Activated B cell treated with CpG ODN at 0.5 μM for 24 hours (primary cell): ENCODE measurements at regions of chr22 and their contacts with region 1.

Region 1: DNA sequence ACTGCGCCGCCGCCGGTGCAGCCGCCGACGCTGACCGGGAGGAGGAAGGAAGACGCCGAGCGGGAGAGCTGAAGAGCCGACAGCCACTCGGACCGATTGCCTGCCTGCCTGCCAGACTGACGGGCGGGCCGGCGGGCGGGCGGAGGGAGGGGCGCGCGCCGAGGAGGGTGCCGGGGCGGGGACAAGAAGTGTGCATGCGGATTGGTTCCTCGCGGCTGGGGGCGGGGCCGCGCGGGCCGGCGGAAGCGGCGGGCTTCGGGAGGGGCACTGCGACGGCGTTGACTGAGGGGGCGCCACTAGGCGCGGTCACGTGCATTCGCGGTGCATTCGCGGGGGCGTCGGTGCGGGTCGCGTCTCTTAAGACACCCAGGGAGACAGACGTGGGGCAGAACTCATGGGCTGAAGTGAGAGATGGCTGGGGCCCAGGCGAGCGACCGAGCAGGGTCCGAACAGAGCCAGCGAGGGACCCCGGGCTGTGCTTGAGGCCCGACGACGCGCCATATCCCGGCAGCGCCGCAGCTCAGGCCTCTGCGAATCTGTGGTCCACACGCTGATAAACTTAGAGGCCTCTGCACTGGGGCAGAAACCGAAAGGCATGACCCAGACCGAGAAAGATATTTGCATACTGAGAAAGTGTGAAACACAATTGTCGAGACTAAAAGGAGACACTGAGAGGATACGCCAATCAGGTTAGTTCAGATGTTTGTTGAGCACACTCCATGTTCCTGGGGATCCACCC is at the start of gene MAPK1:
- DNase-seq: peak; percentile 94
- ATAC-seq: peak; percentile 88
- H3K4me3 Mint-ChIP-seq: peak within 1 kb of the TSS; percentile 95
- H3K27ac Mint-ChIP-seq: peak within 1 kb of the TSS; percentile 100
- H3K4me1 Mint-ChIP-seq: peaks cover 50% of the 10 kb centered on the region
- H3K27me3 Mint-ChIP-seq: no peaks in the 10 kb centered on the region
- CTCF ChIP-seq: no peak
- total RNA-seq, gene MAPK1: 130 and 149 TPM in 2 replicates

Region 2: DNA sequence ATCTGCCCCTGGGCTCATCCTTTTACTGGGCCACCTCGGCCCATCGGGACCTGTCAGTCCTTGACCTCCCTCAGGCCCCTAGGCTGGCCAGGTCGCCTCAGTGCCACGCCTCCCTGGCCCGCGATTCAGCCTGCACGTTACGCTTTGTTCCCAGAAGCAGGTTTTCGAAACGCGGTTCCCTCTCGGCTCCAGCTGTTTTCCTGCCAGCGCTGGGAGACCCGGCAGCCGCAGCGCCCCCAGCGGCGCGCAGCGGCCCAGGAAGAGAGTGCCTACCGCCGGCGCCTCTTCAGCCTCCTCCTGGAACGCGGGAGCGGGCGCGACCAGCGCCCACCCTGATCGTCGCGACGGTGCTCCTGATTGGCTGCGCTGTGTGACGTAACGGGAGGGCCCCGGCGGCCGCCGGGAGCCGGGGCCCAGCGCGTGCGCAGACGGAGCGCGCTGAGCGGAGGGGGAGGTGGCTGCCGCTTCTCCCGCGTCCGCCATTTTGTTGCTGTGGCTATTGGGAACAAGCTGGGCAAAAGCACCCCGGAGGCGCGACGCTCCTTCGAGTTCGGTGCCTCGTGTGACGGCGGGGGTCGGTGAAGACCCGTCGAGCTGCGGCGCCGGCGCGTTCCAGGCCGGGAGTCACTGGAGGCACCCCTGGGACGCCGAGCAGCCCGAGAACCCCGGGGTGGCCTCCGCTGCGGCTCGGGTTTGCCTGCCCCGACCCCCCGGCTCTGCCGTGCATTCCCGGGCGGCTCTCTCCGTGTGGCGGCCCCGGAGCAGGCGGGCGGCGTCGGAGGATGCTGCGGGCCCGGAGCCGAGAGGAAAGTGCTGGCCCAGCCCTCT is 950.5 kb before region 1 on chr22 and contains the start of gene CRKL:
- CTCF ChIA-PET with region 1: no interaction called
- POLR2A ChIA-PET with region 1: no interaction called
- intact Hi-C with region 1: loop called (anchors 5 kb)
- DNase-seq: peak; percentile 89
- ATAC-seq: peak; percentile 97
- H3K4me3 Mint-ChIP-seq: peak within 1 kb of the TSS; percentile 97
- H3K27ac Mint-ChIP-seq: peak within 1 kb of the TSS; percentile 94
- H3K4me1 Mint-ChIP-seq: peaks cover 45% of the 10 kb centered on the region
- H3K27me3 Mint-ChIP-seq: no peaks in the 10 kb centered on the region
- CTCF ChIP-seq: peak; percentile 66
- total RNA-seq, gene CRKL: 51.1 and 55.7 TPM in 2 replicates

Region 3: GRCh38 chr22:20981787-20982562 is 885.7 kb before region 1 on chr22 and contains the start of gene LZTR1:
- CTCF ChIA-PET with region 1: no interaction called
- POLR2A ChIA-PET with region 1: no interaction called
- intact Hi-C with region 1: no loop called
- DNase-seq: peak; percentile 74
- ATAC-seq: peak; percentile 80
- H3K4me3 Mint-ChIP-seq: peak within 1 kb of the TSS; percentile 93
- H3K27ac Mint-ChIP-seq: peak within 1 kb of the TSS; percentile 88
- H3K4me1 Mint-ChIP-seq: peaks cover 31% of the 10 kb centered on the region
- H3K27me3 Mint-ChIP-seq: no peaks in the 10 kb centered on the region
- CTCF ChIP-seq: no peak
- total RNA-seq, gene LZTR1: 79.2 and 89.3 TPM in 2 replicates

Region 4: GRCh38 chr22:21735200-21736076 is 132.3 kb before region 1 on chr22 and contains the start of gene YPEL1:
- CTCF ChIA-PET with region 1: no interaction called
- POLR2A ChIA-PET with region 1: interaction called, 3 read pairs
- intact Hi-C with region 1: loop called (anchors 1 kb)
- DNase-seq: peak; percentile 97
- ATAC-seq: peak; percentile 87
- H3K4me3 Mint-ChIP-seq: peak within 1 kb of the TSS; percentile 93
- H3K27ac Mint-ChIP-seq: peak within 1 kb of the TSS; percentile 96
- H3K4me1 Mint-ChIP-seq: peaks cover 42% of the 10 kb centered on the region
- H3K27me3 Mint-ChIP-seq: no peaks in the 10 kb centered on the region
- CTCF ChIP-seq: no peak
- total RNA-seq, gene YPEL1: 3.0 and 4.1 TPM in 2 replicates

Region 5: GRCh38 chr22:21832291-21833290 is 35.1 kb before region 1 on chr22:
- CTCF ChIA-PET with region 1: no interaction called
- POLR2A ChIA-PET with region 1: interaction called, 8 read pairs
- intact Hi-C with region 1: loop called (anchors 5 kb)
- DNase-seq: no peak
- ATAC-seq: no peak
- H3K4me3 Mint-ChIP-seq: no peak overlapping the region
- H3K27ac Mint-ChIP-seq: peak overlapping the region; percentile 27
- H3K4me1 Mint-ChIP-seq: peaks cover 78% of the 10 kb centered on the region
- H3K27me3 Mint-ChIP-seq: no peaks in the 10 kb centered on the region
- CTCF ChIP-seq: no peak

Region 6: GRCh38 chr22:21938071-21938822 is 70.5 kb after region 1 on chr22:
- CTCF ChIA-PET with region 1: interaction called, 5 read pairs
- POLR2A ChIA-PET with region 1: interaction called, 7 read pairs
- intact Hi-C with region 1: loop called (anchors 5 kb)
- DNase-seq: peak; percentile 93
- ATAC-seq: peak; percentile 95
- H3K4me3 Mint-ChIP-seq: peak overlapping the region; percentile 89
- H3K27ac Mint-ChIP-seq: peak overlapping the region; percentile 85
- H3K4me1 Mint-ChIP-seq: peaks cover 62% of the 10 kb centered on the region
- H3K27me3 Mint-ChIP-seq: no peaks in the 10 kb centered on the region
- CTCF ChIP-seq: peak; percentile 80